GM10248 (cell line): ENCODE measurements at regions of chr11 and their contacts with region 1.

Region 1: DNA sequence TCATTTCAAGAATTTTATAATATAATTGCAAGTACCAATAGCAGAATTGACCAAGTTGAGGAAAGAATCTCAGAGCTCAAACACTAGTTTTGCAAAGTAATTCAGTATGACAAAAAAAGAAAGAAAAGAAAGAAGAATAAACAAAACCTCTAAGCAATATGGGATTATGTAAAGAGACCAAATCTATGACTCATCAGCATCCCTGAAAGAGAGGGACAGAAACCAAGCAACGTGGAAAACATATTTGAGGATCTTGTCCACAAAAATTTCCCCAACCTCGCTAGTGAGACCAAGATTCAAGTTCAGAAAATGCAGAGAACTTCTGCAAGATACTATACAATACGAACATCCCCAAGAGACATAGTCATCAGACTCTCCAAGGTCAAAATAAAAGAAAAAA is 203.7 kb upstream of the DDI1 start:
- DNase-seq: no peak
- CTCF ChIP-seq: no peak

Region 2: DNA sequence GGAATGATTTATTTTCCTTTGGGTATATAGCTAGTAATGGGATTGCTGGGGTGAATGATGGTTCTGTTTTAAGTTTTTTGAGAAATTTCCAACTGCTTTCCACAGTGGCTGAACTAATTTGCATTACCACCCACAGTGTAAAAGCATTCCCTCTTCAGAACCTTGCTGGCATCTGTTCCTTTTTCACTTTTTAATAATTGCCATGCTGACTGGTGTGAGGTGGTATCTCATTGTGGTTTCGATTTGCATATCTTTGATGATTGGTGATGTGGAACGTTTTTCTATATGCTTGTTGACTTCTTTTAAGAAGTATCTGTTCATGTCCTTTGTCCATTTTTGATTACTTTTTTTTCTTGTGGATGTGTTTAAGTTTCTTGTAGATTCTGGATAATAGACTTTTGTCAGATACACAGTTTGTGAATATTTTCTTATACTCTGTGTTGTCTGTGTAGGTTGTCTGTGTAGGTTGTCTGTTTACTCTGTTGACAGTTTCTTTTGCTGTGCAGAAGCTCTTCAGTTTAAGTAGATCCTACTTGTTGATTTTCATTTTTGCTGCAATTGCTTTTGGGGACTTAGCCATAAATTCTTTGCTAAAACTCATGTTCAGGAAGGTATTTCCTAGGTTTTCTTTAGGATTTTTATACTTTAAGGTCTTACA is 88.1 kb before region 1 on chr11:
- CTCF ChIA-PET with region 1: no interaction called
- POLR2A ChIA-PET with region 1: no interaction called
- DNase-seq: no peak
- CTCF ChIP-seq: no peak

Region 3: DNA sequence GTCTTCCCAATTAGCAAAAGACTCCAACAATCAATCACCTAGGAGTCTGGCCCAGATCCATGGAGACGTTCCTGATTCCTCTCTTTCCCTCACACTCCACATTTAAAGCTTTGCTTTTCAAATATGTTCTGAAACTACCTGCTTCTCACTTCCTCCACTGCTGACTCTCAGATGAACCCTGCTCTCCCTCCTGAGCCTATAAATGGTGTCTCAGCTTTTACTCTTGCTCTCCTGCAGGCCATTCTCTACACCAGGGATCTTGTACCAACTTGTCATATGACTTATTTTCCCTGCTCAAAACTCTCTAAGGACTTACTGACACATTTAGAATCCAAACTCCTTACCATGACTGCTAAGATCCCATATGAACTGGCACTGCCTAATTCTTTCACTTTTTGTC is 65.3 kb after region 1 on chr11:
- CTCF ChIA-PET with region 1: no interaction called
- POLR2A ChIA-PET with region 1: interaction called, 10 read pairs
- DNase-seq: peak; percentile 29
- CTCF ChIP-seq: no peak